ENCODE measurements at regions of chrX and their contacts with region 1.

Region 1: GRCh38 chrX:40273356-40274050 is 175.7 kb upstream of the BCOR start:
- DNase-seq: no peak
- H3K4me3 ChIP-seq: no peak overlapping the region
- H3K27ac ChIP-seq: peak overlapping the region in 1 of 4 donors; percentile 34
- H3K4me1 ChIP-seq: no peaks in the 10 kb centered on the region
- H3K27me3 ChIP-seq: no peaks in the 10 kb centered on the region
- CTCF ChIP-seq: no peak
- POLR2A ChIP-seq: no peak

Region 2: DNA sequence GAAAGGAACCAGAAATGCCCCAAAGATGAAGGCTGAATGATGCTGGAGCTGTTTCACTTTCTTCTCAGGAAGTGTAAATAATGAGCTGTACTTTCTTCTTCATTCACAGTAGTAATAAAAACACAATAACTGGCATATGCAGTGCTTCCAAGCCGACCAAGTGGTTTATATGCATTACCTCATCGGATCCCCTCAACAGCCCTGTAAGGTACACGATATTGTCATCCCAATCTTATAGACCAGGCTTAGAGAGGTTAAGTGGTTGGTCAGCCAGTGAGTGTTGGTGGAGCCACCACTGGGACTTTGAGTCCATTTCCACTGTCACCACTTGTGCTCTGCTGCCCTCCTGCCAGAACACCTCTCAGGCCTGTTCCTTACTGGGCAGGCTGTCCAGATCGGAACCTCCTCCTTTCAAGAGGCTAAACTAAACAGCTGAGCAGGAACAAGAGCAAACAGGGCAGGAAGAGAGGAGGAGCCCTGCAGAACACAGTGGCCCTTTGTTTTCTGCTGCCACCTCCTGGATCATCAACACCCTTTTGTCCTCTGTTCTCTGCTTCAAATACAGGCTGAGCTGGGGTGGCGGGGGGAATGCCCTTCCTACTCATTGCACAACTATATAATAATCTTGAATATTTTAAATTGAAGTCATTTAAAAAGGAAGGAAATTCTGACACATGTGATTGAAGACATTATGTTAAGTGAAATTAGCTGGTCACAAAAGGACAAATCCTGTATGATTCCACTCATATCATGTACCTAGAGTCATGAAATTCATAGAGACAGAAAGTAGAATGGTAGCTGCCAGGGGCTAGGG is 194.7 kb after region 1 on chrX:
- intact Hi-C with region 1: loop called (anchors 10 kb)
- DNase-seq: no peak
- H3K4me3 ChIP-seq: no peak overlapping the region
- H3K27ac ChIP-seq: peak overlapping the region in 2 of 4 donors; percentile 32 to 61
- H3K4me1 ChIP-seq: peaks cover 6 to 33% (median 6%) of the 10 kb centered on the region in 3 donors
- H3K27me3 ChIP-seq: peaks cover 0 to 3% (median 0%) of the 10 kb centered on the region in 4 donors
- CTCF ChIP-seq: peak in 4 of 6 experiments; percentile 35 to 55 (median 42)
- POLR2A ChIP-seq: no peak